Heart right ventricle (tissue), 16 donors: ENCODE measurements at regions of chr1 and their contacts with region 1.

Region 1: DNA sequence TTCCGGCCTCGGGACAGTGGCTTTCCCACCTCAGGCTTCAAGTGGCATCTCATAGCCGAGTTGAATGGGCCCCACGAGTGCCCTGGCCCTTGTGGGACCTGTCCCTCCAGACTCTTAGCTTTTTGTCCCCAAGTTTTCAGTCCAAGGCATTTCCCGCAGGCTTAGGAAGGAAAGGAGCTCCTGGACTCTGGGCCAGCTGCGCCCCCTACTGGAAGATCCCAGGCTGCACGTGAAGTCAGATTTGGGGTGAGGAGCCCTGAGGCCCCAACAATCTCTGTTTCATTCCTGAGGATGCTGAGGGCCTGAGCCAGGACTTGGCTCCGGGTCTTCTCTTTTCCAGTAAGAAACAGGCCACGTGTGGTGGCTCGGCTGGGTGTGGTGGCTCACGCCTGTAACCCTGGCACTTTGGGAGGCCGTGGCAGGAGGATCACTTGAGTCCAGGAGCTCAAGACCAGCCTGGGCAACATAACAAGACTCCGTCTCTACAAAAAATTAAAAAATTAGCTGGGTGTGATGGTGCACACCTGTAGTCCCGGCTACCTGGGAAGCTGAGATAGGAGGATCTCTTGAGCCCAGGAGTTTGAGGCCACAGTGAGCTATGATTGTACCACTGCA is 67.4 kb downstream of the ARHGEF10L start:
- DNase-seq: peak; percentile 73 to 78
- ATAC-seq: peak; percentile 10 to 75 (median 60)
- H3K4me3 ChIP-seq: no peak overlapping the region
- H3K27ac ChIP-seq: peak overlapping the region; percentile 15 to 93 (median 82)
- H3K4me1 ChIP-seq: peaks cover 10 to 25% (median 21%) of the 10 kb centered on the region in 9 donors
- H3K27me3 ChIP-seq: no peaks in the 10 kb centered on the region
- CTCF ChIP-seq: peak; percentile 71 to 93 (median 90)

Region 2: GRCh38 chr1:17502326-17502778 is 104.6 kb before region 1 on chr1:
- intact Hi-C with region 1: loop called (anchors 1 to 2 kb)
- DNase-seq: peak; percentile 84 to 89
- ATAC-seq: peak; percentile 93 to 98 (median 96)
- H3K4me3 ChIP-seq: no peak overlapping the region
- H3K27ac ChIP-seq: peak overlapping the region in 2 of 10 donors; percentile 15 to 29
- H3K4me1 ChIP-seq: peaks cover 0 to 12% (median 7%) of the 10 kb centered on the region in 9 donors
- H3K27me3 ChIP-seq: peaks cover 0 to 4% (median 0%) of the 10 kb centered on the region in 7 donors
- CTCF ChIP-seq: peak; percentile 59 to 94 (median 89)